HCT116 (cell line): ENCODE measurements at regions of chr4 and their contacts with region 1.

Region 1: GRCh38 chr4:30757357-30757756 is 37.2 kb downstream of the PCDH7 start:
- DNase-seq: peak; percentile 98
- ATAC-seq: peak; percentile 82
- H3K4me3 ChIP-seq: no peak overlapping the region
- H3K27ac ChIP-seq: peak overlapping the region; percentile 100
- H3K4me1 ChIP-seq: peaks cover 68 to 97% of the 10 kb centered on the region in 2 experiments
- H3K27me3 ChIP-seq: no peaks in the 10 kb centered on the region
- CTCF ChIP-seq: no peak
- POLR2A ChIP-seq: no peak
- RAD21 ChIP-seq: no peak

Region 2: GRCh38 chr4:30770049-30770549 is 12.7 kb after region 1 on chr4:
- CTCF ChIA-PET with region 1: interaction called, 3 read pairs
- POLR2A ChIA-PET with region 1: interaction called, 146 read pairs
- RAD21 ChIA-PET with region 1: interaction called in 1 of 2 experiments, 4 read pairs
- intact Hi-C with region 1: loop called (anchors 1 kb)
- DNase-seq: peak; percentile 97
- ATAC-seq: peak; percentile 77
- H3K4me3 ChIP-seq: no peak overlapping the region
- H3K27ac ChIP-seq: peak overlapping the region; percentile 100
- H3K4me1 ChIP-seq: peaks cover 77 to 98% of the 10 kb centered on the region in 2 experiments
- H3K27me3 ChIP-seq: no peaks in the 10 kb centered on the region
- CTCF ChIP-seq: 0 out of 6 replicates have a peak, but pooled peaks of 1 of the 3 experiments have one; percentile 5
- POLR2A ChIP-seq: no peak
- RAD21 ChIP-seq: peak; percentile 46

Region 3: DNA sequence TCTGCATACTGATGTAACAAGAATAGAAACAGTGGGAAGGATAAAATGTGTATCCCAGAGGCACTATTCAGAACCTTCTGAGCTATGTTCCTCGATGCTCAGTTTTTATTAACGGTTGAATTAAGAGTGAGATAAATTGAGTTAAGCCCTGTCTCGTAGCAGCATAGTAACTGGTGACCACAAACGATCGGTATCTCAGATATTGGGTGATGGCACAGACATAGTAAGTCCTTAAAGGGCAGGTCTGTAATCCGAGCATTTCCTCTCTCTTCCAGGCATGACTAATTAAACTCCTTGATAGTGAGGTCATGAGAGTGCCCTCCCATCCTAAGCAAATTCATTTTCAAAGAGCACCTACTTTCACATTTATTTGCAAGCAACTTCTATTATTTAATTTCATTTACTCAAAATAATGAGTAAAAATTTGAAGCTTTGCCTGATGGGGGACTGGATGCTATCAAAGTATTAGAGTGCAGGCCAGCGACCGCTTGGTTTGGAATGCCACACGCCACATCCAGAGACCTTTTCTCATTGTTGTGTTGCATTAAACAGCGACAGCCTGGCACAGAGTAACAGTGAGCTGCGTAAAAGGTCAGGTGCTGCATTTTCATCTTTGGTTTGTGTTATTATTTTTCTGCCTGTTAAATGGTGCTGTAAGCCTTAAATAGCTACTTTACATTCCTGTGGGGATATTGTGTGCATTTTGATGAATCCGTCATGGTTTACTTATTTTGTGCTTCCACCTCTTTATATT is 64.7 kb after region 1 on chr4:
- CTCF ChIA-PET with region 1: no interaction called
- POLR2A ChIA-PET with region 1: interaction called, 10 read pairs
- RAD21 ChIA-PET with region 1: no interaction called
- intact Hi-C with region 1: loop called (anchors 5 kb)
- DNase-seq: peak; percentile 94
- ATAC-seq: peak; percentile 89
- H3K4me3 ChIP-seq: peak overlapping the region; percentile 29 to 48
- H3K27ac ChIP-seq: peak overlapping the region; percentile 100
- H3K4me1 ChIP-seq: peaks cover 78 to 99% of the 10 kb centered on the region in 2 experiments
- H3K27me3 ChIP-seq: no peaks in the 10 kb centered on the region
- CTCF ChIP-seq: no peak
- POLR2A ChIP-seq: peak; percentile 24
- RAD21 ChIP-seq: peak; percentile 25; the same call in 1 of the 2 replicates

Region 4: DNA sequence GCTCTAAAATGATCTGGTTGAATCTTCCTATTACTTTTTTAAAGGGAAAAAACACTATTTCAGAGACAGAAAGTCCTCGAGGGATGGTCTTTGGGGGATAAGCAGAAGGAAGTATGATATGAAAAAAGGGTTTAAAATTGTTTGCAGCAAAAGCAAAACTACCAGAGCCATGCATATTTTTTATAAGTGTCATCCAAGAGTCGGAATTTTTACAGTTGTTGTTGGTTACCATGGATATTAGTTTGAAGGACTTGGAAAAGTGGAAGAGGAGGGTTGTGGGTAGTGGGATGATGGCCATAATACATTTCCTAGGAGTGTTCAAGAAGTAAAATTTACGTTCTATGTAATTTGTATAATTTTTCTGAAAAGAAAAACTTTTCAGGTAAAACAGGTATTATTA is 97.2 kb after region 1 on chr4:
- CTCF ChIA-PET with region 1: no interaction called
- POLR2A ChIA-PET with region 1: interaction called, 3 read pairs
- RAD21 ChIA-PET with region 1: no interaction called
- intact Hi-C with region 1: loop called (anchors 5 kb)
- DNase-seq: peak; percentile 70
- ATAC-seq: peak; percentile 62
- H3K4me3 ChIP-seq: 0 out of 4 replicates have a peak overlapping the region, but pooled peaks of 1 of the 2 experiments have one; percentile 7
- H3K27ac ChIP-seq: peak overlapping the region; percentile 100
- H3K4me1 ChIP-seq: peaks cover 69 to 96% of the 10 kb centered on the region in 2 experiments
- H3K27me3 ChIP-seq: no peaks in the 10 kb centered on the region
- CTCF ChIP-seq: no peak
- POLR2A ChIP-seq: no peak
- RAD21 ChIP-seq: no peak

Region 5: DNA sequence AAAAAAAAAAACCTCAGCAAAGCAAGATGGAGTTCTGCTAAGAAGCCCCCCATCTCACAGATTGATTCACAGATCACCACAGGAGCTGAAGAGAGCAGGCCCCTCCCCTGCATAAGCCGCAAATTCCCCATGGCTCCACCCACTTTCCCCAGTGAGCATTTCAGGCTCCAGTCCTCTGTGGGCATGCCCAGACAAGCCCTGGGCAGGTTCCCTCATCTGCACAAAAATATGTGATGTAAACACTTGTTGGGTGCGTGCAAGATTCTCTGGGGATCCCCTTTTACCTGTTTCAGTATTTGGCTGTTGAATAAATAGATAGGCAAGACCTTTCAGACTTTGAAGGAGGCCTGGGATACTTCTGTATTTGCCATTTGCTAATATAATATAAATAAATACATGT is 477.1 kb after region 1 on chr4:
- CTCF ChIA-PET with region 1: no interaction called
- POLR2A ChIA-PET with region 1: interaction called, 3 read pairs
- RAD21 ChIA-PET with region 1: no interaction called
- intact Hi-C with region 1: loop called (anchors 10 kb)
- DNase-seq: peak; percentile 45
- ATAC-seq: peak; percentile 71
- H3K4me3 ChIP-seq: no peak overlapping the region
- H3K27ac ChIP-seq: peak overlapping the region; percentile 89
- H3K4me1 ChIP-seq: peaks cover 52 to 66% of the 10 kb centered on the region in 2 experiments
- H3K27me3 ChIP-seq: no peaks in the 10 kb centered on the region
- CTCF ChIP-seq: no peak
- POLR2A ChIP-seq: no peak
- RAD21 ChIP-seq: no peak; the same call in 1 of the 2 replicates